ENCODE measurements at regions of chr11 and their contacts with region 1.

Region 1: DNA sequence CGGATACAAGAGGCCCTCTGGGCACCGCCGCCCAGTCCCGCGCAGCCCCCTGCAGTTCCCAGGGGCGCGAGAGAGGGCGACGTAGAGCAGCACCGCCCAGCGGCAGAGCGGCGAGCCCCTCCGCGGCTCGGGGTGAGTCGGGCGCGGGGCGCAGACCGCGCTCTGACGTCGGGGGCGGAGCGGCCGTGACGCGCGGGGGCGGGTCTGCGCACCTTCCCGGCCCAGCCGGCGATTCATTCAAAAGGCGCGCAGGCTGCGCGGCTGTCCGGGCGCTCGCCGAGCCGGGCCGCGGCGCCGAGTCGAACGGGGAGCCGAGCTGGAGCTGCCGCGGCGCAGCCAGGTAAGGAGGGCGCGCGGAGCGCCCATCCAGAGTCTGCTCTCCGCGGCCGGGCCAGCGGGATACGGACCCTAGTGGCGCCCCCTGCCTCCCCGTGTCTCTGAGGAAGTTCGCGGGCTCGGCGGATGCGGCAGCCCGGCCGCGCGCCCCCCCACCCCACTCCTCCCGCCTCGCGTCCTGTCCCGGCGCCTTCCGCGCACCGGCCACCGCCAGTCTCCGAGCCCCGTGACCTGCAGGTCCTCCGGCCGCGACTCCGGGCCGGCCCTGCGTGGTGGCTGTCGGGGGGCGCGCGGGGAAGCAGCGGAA is at the start of gene RELT:
- DNase-seq: peak; percentile 96
- ATAC-seq: peak; percentile 94
- H3K4me3 Mint-ChIP-seq: peak within 1 kb of the TSS; percentile 92
- H3K27ac Mint-ChIP-seq: peak within 1 kb of the TSS; percentile 93
- H3K4me1 Mint-ChIP-seq: peaks cover 33% of the 10 kb centered on the region
- H3K27me3 Mint-ChIP-seq: no peaks in the 10 kb centered on the region
- total RNA-seq, gene RELT: 18.5 to 21.3 TPM

Region 2: DNA sequence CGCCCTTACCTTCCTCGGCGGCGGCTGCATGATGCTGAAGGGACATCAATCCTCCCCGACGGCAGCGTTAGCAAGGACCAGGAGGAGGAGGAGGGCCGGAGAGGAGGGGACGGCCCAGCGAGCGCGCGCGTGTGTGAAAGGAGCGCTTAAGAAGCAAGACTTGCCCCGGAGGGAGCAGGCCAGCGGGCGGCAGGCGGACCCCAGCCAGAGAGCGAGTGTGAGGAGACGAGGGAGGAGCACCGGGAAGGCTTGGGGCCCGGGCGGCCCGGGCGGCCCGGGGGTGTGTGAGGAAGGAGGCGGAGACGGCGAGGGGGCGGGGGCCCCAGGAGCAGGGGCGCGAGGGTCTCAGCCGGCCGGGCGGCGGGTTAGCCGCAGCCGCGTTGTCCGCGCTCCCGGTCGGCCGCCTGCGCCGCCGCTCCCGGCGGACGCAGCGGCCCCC is 234.4 kb before region 1 on chr11:
- CTCF ChIA-PET with region 1: no interaction called
- POLR2A ChIA-PET with region 1: no interaction called
- intact Hi-C with region 1: loop called in 1 of 2 experiments (anchors 1 kb)
- DNase-seq: peak; percentile 73
- ATAC-seq: peak; percentile 17
- H3K4me3 Mint-ChIP-seq: peak overlapping the region; percentile 92
- H3K27ac Mint-ChIP-seq: peak overlapping the region; percentile 82
- H3K4me1 Mint-ChIP-seq: peaks cover 40% of the 10 kb centered on the region
- H3K27me3 Mint-ChIP-seq: no peaks in the 10 kb centered on the region

Region 3: GRCh38 chr11:73198677-73199076 is 177.6 kb before region 1 on chr11:
- CTCF ChIA-PET with region 1: no interaction called
- POLR2A ChIA-PET with region 1: no interaction called
- intact Hi-C with region 1: no loop called
- DNase-seq: no peak
- ATAC-seq: no peak
- H3K4me3 Mint-ChIP-seq: no peak overlapping the region
- H3K27ac Mint-ChIP-seq: no peak overlapping the region
- H3K4me1 Mint-ChIP-seq: no peaks in the 10 kb centered on the region
- H3K27me3 Mint-ChIP-seq: no peaks in the 10 kb centered on the region

Region 4: GRCh38 chr11:73350908-73351636 is 25.2 kb before region 1 on chr11:
- CTCF ChIA-PET with region 1: interaction called, 42 read pairs
- POLR2A ChIA-PET with region 1: no interaction called
- intact Hi-C with region 1: loop called in 1 of 2 experiments (anchors 1 kb)
- DNase-seq: peak; percentile 75
- ATAC-seq: peak; percentile 85
- H3K4me3 Mint-ChIP-seq: no peak overlapping the region
- H3K27ac Mint-ChIP-seq: no peak overlapping the region
- H3K4me1 Mint-ChIP-seq: peaks cover 2% of the 10 kb centered on the region
- H3K27me3 Mint-ChIP-seq: no peaks in the 10 kb centered on the region

Region 5: DNA sequence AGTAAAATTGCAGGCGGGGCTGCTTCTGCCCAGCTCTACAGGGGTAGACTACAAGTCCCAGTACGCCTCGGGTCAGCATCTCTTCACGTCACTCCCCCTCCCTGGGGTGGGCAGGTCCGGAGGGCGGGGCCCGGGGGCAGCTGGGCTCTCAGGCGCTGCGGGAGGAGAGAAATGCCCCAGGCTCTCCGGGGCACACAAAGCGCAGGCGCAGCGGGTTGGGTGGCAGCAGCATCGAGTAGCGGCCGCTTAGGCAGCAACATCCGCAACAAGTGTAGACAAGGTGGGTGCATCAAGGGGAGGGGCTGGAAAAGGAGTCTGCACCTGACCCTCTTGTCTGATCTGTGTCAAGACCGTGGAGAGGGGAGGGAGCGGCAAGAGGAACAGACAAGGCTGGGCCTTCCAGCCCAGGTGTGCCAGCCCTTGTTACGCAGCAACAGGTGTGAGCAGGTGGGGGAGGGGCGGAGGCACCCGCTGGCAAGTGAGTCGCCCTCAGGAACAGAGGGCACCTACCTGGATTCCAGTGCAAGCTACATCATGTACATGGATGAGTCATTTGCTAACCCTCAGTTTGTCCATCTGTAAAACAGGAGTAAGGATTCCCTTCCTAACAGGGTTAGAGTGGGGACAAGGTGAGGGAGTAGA is 271.3 kb after region 1 on chr11:
- CTCF ChIA-PET with region 1: interaction called, 3 read pairs
- POLR2A ChIA-PET with region 1: no interaction called
- intact Hi-C with region 1: loop called (anchors 1 kb)
- DNase-seq: peak; percentile 96
- ATAC-seq: peak; percentile 100
- H3K4me3 Mint-ChIP-seq: peak overlapping the region; percentile 75
- H3K27ac Mint-ChIP-seq: peak overlapping the region; percentile 86
- H3K4me1 Mint-ChIP-seq: peaks cover 15% of the 10 kb centered on the region
- H3K27me3 Mint-ChIP-seq: no peaks in the 10 kb centered on the region

Region 6: GRCh38 chr11:73779084-73779902 is 403.0 kb after region 1 on chr11:
- CTCF ChIA-PET with region 1: no interaction called
- POLR2A ChIA-PET with region 1: no interaction called
- intact Hi-C with region 1: loop called in 1 of 2 experiments (anchors 1 kb)
- DNase-seq: peak; percentile 100
- ATAC-seq: peak; percentile 97
- H3K4me3 Mint-ChIP-seq: peak overlapping the region; percentile 80
- H3K27ac Mint-ChIP-seq: peak overlapping the region; percentile 98
- H3K4me1 Mint-ChIP-seq: peaks cover 10% of the 10 kb centered on the region
- H3K27me3 Mint-ChIP-seq: no peaks in the 10 kb centered on the region

Region 7: DNA sequence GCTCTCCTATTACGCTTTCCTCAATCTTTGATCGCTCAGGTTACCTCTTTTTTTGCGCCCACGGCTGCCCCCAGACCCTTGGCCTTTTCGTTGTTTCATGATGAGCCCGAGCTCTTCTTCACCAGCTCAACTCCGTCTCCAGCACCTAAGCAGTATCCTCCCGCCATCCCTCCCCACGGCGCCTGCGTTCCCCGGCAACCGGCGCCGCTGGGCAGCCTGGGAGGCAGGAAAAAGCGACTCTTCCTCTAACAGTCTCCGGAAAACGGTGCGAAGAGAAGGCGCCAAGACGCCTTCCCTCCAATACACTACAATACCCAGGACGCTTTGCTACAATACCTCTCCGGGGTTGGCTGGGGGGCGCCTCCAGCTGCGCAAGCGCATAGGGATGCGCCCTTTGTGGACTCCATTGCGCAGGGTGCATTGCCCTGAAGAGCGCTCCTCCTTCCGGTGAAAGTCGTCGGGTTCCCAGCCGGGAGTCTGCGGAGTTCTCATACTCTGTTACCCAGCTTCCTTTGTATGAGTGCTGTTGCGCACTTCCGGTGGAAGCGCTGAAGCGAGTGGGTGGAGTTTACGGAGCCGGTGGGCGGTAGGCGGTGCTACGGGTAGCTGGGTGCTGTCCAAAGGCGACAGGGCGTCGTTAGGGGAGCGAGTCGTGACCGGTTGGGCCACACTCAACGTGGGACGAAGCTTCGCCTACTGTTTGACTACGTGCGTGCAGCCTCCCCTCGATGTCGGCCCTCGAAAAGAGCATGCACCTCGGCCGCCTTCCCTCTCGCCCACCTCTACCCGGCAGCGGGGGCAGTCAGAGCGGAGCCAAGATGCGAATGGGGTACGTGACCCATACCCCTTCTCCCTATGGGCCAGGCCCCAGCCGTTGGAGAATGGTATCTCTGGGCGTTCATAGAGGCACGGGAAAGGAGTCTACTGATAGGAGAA is 794.7 kb after region 1 on chr11 and contains the starts of genes C2CD3 and PPME1:
- CTCF ChIA-PET with region 1: no interaction called
- POLR2A ChIA-PET with region 1: no interaction called
- intact Hi-C with region 1: loop called in 1 of 2 experiments (anchors 1 kb)
- DNase-seq: peak; percentile 98
- ATAC-seq: peak; percentile 96
- H3K4me3 Mint-ChIP-seq: no peak within 1 kb of the TSS
- H3K27ac Mint-ChIP-seq: no peak within 1 kb of the TSS
- H3K4me1 Mint-ChIP-seq: peaks cover 16% of the 10 kb centered on the region
- H3K27me3 Mint-ChIP-seq: no peaks in the 10 kb centered on the region
- total RNA-seq, gene C2CD3: 23.9 to 28.0 TPM
- total RNA-seq, gene PPME1: 54.2 to 61.5 TPM